Heart right ventricle (tissue), 16 donors: ENCODE measurements at regions of chr1 and their contacts with region 1.

Region 1: GRCh38 chr1:74197657-74198552 is at the starts of genes FPGT and LRRIQ3:
- DNase-seq: peak; percentile 95 to 98
- ATAC-seq: peak; percentile 99 to 100 (median 100)
- H3K4me3 ChIP-seq: peak within 1 kb of the TSS; percentile 54 to 77 (median 66)
- H3K27ac ChIP-seq: peak within 1 kb of the TSS in 9 of 10 donors; percentile 77 to 92 (median 85)
- H3K4me1 ChIP-seq: peaks cover 0 to 26% (median 14%) of the 10 kb centered on the region in 9 donors
- H3K27me3 ChIP-seq: no peaks in the 10 kb centered on the region
- CTCF ChIP-seq: peak in 1 of 9 donors; percentile 9
- total RNA-seq, gene FPGT: 10.4 to 18.7 (median 12.1) TPM
- total RNA-seq, gene LRRIQ3: 0.11 to 1.1 (median 0.56) TPM

Region 2: DNA sequence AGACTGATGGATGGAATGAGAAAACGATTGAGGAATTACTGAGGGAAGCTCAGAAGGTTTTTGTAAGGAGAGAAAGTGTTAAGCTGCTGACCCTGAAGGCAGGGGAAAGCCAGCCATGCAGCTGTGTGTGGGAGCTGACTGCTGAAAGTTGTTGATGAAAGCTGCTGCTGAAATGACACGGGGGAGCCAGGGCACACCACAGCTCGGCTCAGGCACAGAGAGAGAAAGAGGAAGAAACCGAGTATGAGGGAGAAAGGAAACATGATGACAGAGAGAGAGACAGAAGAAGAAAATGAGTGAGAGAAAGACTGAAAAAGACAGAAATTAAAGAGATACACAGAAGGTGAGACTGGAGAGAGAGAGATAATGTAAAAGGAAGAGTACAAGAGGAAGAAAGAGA is 199.0 kb after region 1 on chr1:
- intact Hi-C with region 1: loop called in 1 of 10 experiments (anchors 5 kb)
- DNase-seq: peak; percentile 27 to 45
- ATAC-seq: peak in 6 of 8 donors; percentile 45 to 76 (median 70)
- H3K4me3 ChIP-seq: no peak overlapping the region
- H3K27ac ChIP-seq: peak overlapping the region; percentile 0 to 73 (median 63)
- H3K4me1 ChIP-seq: peaks cover 17 to 56% (median 44%) of the 10 kb centered on the region in 9 donors
- H3K27me3 ChIP-seq: no peaks in the 10 kb centered on the region
- CTCF ChIP-seq: no peak

Region 3: GRCh38 chr1:74470936-74471335 is 273.0 kb after region 1 on chr1:
- intact Hi-C with region 1: loop called in 1 of 10 experiments (anchors 5 kb)
- DNase-seq: no peak
- ATAC-seq: peak in 7 of 8 donors; percentile 18 to 52 (median 43)
- H3K4me3 ChIP-seq: no peak overlapping the region
- H3K27ac ChIP-seq: peak overlapping the region in 9 of 10 donors; percentile 45 to 79 (median 67)
- H3K4me1 ChIP-seq: peaks cover 0 to 49% (median 24%) of the 10 kb centered on the region in 9 donors
- H3K27me3 ChIP-seq: no peaks in the 10 kb centered on the region
- CTCF ChIP-seq: no peak